Natural killer cell (primary cell): ENCODE measurements at regions of chr12 and their contacts with region 1.

Region 1: GRCh38 chr12:108562348-108563135 is at the start of gene ISCU:
- DNase-seq: peak; percentile 99 to 100
- ATAC-seq: peak; percentile 76 to 92 (median 77)
- H3K4me3 ChIP-seq: peak within 1 kb of the TSS; percentile 97
- H3K4me3 Mint-ChIP-seq: peak within 1 kb of the TSS; percentile 100
- H3K27ac ChIP-seq: peak within 1 kb of the TSS; percentile 96
- H3K27ac Mint-ChIP-seq: peak within 1 kb of the TSS; percentile 99 to 100
- H3K4me1 ChIP-seq: peaks cover 38% of the 10 kb centered on the region
- H3K4me1 Mint-ChIP-seq: peaks cover 39 to 42% of the 10 kb centered on the region in 2 donors
- H3K27me3 ChIP-seq: no peaks in the 10 kb centered on the region
- H3K27me3 Mint-ChIP-seq: no peaks in the 10 kb centered on the region
- CTCF ChIP-seq: no peak
- total RNA-seq, gene ISCU: 86.9 to 103 (median 97.4) TPM

Region 2: GRCh38 chr12:108482717-108483212 is 79.8 kb before region 1 on chr12:
- intact Hi-C with region 1: no loop called
- DNase-seq: no peak
- ATAC-seq: no peak
- H3K4me3 ChIP-seq: no peak overlapping the region
- H3K4me3 Mint-ChIP-seq: no peak overlapping the region
- H3K27ac ChIP-seq: no peak overlapping the region
- H3K27ac Mint-ChIP-seq: no peak overlapping the region
- H3K4me1 ChIP-seq: no peaks in the 10 kb centered on the region
- H3K4me1 Mint-ChIP-seq: no peaks in the 10 kb centered on the region
- H3K27me3 ChIP-seq: peaks cover 2% of the 10 kb centered on the region
- H3K27me3 Mint-ChIP-seq: peaks cover 17 to 75% of the 10 kb centered on the region in 2 donors
- CTCF ChIP-seq: no peak

Region 3: DNA sequence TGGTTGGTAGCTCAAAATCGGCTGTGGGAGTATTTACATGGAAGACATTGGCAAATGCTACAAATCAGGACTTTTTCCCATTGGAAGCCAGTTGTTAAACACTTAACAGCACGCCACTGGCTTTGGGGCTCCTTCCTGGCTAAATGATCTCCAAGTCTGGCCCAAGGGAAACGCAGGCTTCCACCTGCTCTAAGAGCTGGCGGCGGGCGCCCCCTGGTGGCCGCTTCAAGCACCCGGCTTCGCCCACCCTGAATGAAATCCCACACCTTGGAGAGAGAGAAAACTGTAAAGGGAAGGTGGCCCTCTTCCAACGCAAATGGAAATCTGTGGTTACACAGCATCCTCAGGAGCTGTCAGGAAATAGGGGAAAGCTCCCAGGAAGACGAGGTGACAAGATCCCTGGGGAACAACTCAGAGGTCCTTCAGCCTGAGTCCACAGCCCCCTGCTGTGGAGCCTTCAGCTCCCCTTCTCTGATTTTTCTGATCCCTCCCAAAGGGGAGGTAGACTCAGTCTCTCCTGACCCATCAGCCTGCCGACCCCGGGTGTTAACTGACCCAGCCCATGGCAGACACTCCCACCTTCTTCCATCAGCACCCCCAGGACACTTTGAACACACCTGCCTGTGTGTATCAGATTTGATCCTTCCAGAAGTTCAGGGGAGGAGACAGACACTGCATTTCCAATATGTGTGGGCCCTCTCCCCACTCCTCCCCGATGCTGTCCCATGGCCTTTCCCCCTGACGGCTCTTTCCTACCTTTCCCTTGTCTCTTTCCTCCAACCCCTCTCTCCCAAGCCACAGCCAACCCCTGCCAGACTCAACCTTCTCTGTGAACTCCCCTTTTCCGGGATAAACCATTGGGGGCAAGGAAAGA is 55.8 kb after region 1 on chr12:
- intact Hi-C with region 1: loop called (anchors 1 kb)
- DNase-seq: peak; percentile 76 to 89
- ATAC-seq: peak; percentile 39 to 65 (median 45)
- H3K4me3 ChIP-seq: no peak overlapping the region
- H3K4me3 Mint-ChIP-seq: peak overlapping the region; percentile 56
- H3K27ac ChIP-seq: peak overlapping the region; percentile 79
- H3K27ac Mint-ChIP-seq: peak overlapping the region; percentile 92 to 100
- H3K4me1 ChIP-seq: peaks cover 56% of the 10 kb centered on the region
- H3K4me1 Mint-ChIP-seq: peaks cover 68 to 70% of the 10 kb centered on the region in 2 donors
- H3K27me3 ChIP-seq: no peaks in the 10 kb centered on the region
- H3K27me3 Mint-ChIP-seq: no peaks in the 10 kb centered on the region
- CTCF ChIP-seq: peak; percentile 98

Region 4: DNA sequence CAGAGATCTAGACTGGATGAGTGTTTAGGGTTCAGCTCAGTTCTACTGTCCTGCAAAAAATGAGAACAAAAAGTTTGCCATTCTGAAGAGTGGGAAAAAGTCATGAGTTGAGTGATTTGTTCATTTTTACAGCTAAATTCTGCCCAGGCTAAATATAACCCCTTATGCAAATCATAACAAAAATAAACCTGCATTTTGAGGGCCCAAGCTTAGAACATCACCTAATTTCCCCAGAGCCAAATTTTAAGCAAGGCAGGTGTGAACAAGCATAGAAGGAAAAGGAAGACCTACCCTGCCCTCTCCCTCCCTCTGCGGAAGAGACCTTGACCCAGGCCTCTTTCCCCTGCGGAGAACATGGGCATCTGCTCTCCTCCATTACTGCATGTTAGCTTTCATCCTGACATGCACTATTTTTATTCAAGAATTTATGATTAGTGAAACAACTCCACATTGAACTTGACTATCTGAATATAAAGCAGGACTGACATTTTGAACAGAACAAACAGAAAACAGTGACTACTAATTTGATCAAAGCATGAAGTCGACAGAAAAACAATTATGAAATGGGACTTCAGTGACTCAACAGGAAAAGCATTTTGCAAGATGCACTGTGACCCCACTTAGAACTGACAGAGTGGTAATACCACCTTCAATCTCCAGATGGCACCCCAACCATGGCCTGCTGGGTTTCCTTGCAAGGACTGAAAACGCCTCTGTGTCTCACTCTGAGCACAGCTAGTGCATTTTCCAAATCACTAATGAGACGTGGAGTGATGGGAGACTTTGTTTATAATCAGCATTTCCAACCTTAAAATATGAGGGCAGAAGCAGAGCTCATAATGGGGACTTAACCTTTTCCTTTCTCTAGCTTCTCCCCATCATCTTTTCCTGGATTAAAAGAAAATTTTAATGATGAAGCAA is 102.1 kb after region 1 on chr12:
- intact Hi-C with region 1: loop called (anchors 2 kb)
- DNase-seq: peak; percentile 65 to 90
- ATAC-seq: peak; percentile 99 to 100 (median 100)
- H3K4me3 ChIP-seq: no peak overlapping the region
- H3K4me3 Mint-ChIP-seq: no peak overlapping the region
- H3K27ac ChIP-seq: peak overlapping the region; percentile 14
- H3K27ac Mint-ChIP-seq: peak overlapping the region; percentile 63 to 88
- H3K4me1 ChIP-seq: peaks cover 6% of the 10 kb centered on the region
- H3K4me1 Mint-ChIP-seq: peaks cover 5 to 12% of the 10 kb centered on the region in 2 donors
- H3K27me3 ChIP-seq: no peaks in the 10 kb centered on the region
- H3K27me3 Mint-ChIP-seq: no peaks in the 10 kb centered on the region
- CTCF ChIP-seq: peak; percentile 84

Region 5: GRCh38 chr12:108803428-108804105 is 241.0 kb after region 1 on chr12:
- intact Hi-C with region 1: loop called (anchors 1 kb)
- DNase-seq: peak; percentile 44 to 89
- ATAC-seq: peak; percentile 87 to 98 (median 93)
- H3K4me3 ChIP-seq: no peak overlapping the region
- H3K4me3 Mint-ChIP-seq: no peak overlapping the region
- H3K27ac ChIP-seq: no peak overlapping the region
- H3K27ac Mint-ChIP-seq: no peak overlapping the region
- H3K4me1 ChIP-seq: peaks cover 3% of the 10 kb centered on the region
- H3K4me1 Mint-ChIP-seq: no peaks in the 10 kb centered on the region
- H3K27me3 ChIP-seq: no peaks in the 10 kb centered on the region
- H3K27me3 Mint-ChIP-seq: no peaks in the 10 kb centered on the region
- CTCF ChIP-seq: peak; percentile 97

Region 6: DNA sequence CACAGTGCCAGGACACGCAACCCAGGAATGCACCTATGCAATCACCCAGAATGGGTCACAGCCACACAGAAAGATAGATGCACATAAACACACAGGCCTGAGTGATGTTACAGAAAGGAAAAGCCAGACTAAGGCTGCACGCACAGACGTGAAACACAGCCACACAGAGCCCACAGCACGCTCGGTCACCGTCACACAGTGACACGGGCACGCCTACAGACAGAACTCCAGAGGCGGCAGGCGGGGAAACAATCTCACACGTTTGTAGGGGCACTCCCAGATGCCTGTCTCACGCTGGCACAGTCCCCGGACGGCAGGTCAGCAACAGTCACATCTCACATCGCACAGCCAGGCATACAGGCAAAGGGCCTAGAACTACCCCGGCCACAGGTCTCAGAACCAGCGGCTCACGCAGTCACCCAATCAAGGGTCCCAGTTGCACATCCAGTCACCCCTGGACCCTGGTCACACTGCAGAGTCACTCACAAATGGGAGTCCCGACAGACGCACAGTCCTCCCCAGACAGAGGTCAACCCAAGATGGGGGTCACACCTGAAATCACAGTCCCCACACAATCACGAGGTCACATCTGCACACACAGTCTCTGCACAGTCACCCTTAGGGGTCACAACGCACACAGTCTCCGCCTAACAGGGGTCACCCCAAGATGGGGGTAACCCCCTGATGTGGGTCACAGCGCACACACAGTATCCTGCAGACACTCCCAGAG is 294.1 kb after region 1 on chr12:
- intact Hi-C with region 1: loop called (anchors 1 kb)
- DNase-seq: peak; percentile 70 to 88
- ATAC-seq: peak; percentile 64 to 79 (median 66)
- H3K4me3 ChIP-seq: peak overlapping the region; percentile 73
- H3K4me3 Mint-ChIP-seq: peak overlapping the region; percentile 94
- H3K27ac ChIP-seq: peak overlapping the region; percentile 75
- H3K27ac Mint-ChIP-seq: peak overlapping the region; percentile 96
- H3K4me1 ChIP-seq: peaks cover 40% of the 10 kb centered on the region
- H3K4me1 Mint-ChIP-seq: peaks cover 49 to 54% of the 10 kb centered on the region in 2 donors
- H3K27me3 ChIP-seq: no peaks in the 10 kb centered on the region
- H3K27me3 Mint-ChIP-seq: no peaks in the 10 kb centered on the region
- CTCF ChIP-seq: no peak

Region 7: GRCh38 chr12:109052414-109053323 is 490.1 kb after region 1 on chr12 and contains the start of gene USP30:
- intact Hi-C with region 1: loop called (anchors 2 kb)
- DNase-seq: peak; percentile 83 to 94
- ATAC-seq: peak; percentile 65 to 90 (median 85)
- H3K4me3 ChIP-seq: peak within 1 kb of the TSS; percentile 87
- H3K4me3 Mint-ChIP-seq: peak within 1 kb of the TSS; percentile 99
- H3K27ac ChIP-seq: peak within 1 kb of the TSS; percentile 94
- H3K27ac Mint-ChIP-seq: peak within 1 kb of the TSS; percentile 94 to 97
- H3K4me1 ChIP-seq: peaks cover 23% of the 10 kb centered on the region
- H3K4me1 Mint-ChIP-seq: peaks cover 23 to 27% of the 10 kb centered on the region in 2 donors
- H3K27me3 ChIP-seq: no peaks in the 10 kb centered on the region
- H3K27me3 Mint-ChIP-seq: no peaks in the 10 kb centered on the region
- CTCF ChIP-seq: no peak
- total RNA-seq, gene USP30: 18.4 to 20.8 (median 20.1) TPM

Region 8: GRCh38 chr12:109069307-109070231 is 507.0 kb after region 1 on chr12:
- intact Hi-C with region 1: no loop called
- DNase-seq: no peak
- ATAC-seq: no peak
- H3K4me3 ChIP-seq: no peak overlapping the region
- H3K4me3 Mint-ChIP-seq: no peak overlapping the region
- H3K27ac ChIP-seq: no peak overlapping the region
- H3K27ac Mint-ChIP-seq: no peak overlapping the region
- H3K4me1 ChIP-seq: no peaks in the 10 kb centered on the region
- H3K4me1 Mint-ChIP-seq: peaks cover 0 to 5% of the 10 kb centered on the region in 2 donors
- H3K27me3 ChIP-seq: no peaks in the 10 kb centered on the region
- H3K27me3 Mint-ChIP-seq: no peaks in the 10 kb centered on the region
- CTCF ChIP-seq: no peak

Region 9: DNA sequence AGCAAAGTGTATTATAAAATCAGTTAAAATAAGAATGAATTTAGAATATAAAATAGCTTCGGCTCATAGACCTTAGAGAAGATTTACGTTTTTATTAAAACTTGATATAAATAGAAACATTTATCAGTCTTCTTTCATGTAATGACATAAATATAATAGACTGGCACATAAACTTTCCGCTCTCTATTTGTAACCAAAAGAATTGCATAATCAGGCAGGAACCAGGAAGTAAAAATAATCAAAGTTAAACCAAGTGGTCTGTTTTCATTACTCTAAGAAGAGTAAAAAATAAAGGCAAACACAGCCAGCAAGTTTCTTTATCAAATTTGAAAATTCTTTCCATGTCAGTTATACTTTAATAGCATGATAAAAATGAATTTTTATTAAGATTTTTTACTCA is 1672.2 kb after region 1 on chr12:
- intact Hi-C with region 1: no loop called
- DNase-seq: no peak
- ATAC-seq: no peak
- H3K4me3 ChIP-seq: no peak overlapping the region
- H3K4me3 Mint-ChIP-seq: no peak overlapping the region
- H3K27ac ChIP-seq: no peak overlapping the region
- H3K27ac Mint-ChIP-seq: no peak overlapping the region
- H3K4me1 ChIP-seq: no peaks in the 10 kb centered on the region
- H3K4me1 Mint-ChIP-seq: no peaks in the 10 kb centered on the region
- H3K27me3 ChIP-seq: no peaks in the 10 kb centered on the region
- H3K27me3 Mint-ChIP-seq: peaks cover under 1 to 20% of the 10 kb centered on the region in 2 donors
- CTCF ChIP-seq: no peak